HEK293T (cell line): ENCODE measurements at regions of chr17 and their contacts with region 1.

Region 1: DNA sequence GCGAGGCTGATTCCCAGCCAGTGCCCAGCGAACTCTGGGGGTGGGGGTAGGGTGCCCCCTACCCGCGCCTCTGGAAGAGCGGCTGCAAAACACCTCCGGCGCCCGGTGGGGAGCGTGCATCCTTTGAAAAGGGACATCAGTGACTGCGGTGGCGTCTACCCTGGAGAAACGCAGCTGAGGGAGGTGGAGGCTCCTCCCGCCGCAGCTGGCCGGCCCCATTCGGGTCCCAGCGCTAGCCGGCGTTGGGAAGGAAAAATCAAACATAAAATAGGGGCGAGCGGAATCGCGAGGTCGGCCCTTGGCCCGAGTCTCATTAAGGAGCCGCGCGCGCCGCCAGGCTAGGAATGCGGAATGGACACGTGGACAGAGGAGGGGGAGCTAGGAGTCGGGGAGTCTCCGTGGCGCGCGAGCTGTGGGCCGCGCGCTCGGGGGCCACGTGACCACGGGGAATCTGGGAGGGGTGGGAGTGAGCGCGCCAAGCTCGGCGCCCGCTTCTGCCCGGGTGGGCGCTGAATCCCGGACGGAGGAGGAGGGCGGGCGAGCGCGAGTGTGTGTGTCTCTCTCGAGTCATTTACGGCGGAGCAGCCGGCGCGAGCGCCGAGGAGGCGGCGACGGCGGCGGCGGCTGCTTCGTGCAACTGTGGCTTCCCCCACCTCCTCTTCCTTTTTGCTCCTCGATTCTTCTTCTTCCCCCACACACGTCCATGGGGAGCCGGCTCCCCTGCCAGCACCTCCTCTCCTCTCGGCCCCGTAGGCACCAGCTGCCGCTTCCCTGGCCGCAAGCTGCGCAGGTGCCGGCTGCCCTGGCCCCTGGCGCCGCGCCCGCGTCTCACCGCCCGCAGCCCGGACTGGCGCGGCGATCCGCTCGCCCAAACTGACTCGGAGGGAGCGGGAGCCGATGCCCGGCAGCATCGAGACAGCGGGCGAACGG is at the start of gene TMEM132E:
- DNase-seq: peak; percentile 19

Region 2: DNA sequence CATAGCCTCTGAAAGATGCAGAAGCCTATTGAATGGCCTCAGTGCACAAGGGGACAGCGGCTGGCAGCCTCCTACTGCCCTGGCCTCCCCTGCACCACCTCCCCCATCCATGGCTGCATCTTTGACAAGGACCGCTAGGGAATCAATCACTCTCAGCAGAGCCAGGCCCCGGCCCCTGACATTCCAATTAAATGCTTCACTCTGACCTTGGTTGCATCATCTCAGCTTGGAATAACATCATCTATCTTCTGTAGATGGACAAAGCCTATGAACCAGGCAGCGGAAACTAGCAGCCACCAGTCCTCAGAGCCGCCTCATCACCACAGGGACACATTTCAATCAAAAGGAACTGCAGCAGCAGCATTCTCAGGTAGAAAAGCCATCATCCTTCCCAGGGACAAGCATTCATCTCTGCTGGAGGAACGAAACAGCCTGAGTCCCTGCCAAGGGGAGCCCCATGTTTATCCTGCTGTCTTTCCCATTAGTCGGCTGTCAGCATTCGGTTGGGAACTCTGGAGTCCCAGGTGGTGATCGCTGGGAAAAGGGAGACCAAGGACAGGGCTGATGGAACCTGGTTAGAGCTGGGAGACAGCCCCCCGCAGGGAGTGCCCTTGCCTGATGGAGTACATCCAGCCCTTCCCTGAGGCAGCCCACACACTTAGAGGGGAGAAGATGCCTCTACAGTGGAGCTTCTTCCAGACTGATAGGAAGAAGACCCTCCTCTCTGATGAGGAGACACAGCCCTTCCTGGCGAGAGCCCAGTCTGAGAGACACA is 11.4 kb before region 1 on chr17:
- CTCF ChIA-PET with region 1: interaction called, 3 read pairs
- POLR2A ChIA-PET with region 1: interaction called, 14 read pairs
- DNase-seq: no peak

Region 3: DNA sequence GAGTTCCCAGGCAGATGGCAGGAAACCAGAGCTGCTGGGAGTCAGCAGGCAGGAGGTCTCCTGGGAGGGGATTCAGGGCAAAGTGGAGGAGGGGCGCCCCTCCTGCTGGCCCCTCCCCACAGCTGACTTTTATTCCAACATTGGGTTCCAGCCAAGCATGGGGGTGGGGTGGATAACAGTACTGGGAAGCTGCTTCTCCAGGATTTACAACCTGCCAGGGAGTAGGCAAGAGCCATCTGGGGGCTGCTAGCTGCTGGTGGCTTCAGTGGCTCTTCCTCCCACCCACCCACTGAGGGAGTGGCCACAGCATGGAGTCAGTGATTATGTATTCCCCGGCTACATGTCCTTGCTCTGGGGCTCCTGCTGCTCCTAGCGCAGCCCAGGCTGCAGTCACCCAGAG is 36.9 kb after region 1 on chr17:
- CTCF ChIA-PET with region 1: no interaction called
- POLR2A ChIA-PET with region 1: interaction called, 11 read pairs
- DNase-seq: no peak